SK-N-SH (cell line): ENCODE measurements at regions of chr16 and their contacts with region 1.

Region 1: DNA sequence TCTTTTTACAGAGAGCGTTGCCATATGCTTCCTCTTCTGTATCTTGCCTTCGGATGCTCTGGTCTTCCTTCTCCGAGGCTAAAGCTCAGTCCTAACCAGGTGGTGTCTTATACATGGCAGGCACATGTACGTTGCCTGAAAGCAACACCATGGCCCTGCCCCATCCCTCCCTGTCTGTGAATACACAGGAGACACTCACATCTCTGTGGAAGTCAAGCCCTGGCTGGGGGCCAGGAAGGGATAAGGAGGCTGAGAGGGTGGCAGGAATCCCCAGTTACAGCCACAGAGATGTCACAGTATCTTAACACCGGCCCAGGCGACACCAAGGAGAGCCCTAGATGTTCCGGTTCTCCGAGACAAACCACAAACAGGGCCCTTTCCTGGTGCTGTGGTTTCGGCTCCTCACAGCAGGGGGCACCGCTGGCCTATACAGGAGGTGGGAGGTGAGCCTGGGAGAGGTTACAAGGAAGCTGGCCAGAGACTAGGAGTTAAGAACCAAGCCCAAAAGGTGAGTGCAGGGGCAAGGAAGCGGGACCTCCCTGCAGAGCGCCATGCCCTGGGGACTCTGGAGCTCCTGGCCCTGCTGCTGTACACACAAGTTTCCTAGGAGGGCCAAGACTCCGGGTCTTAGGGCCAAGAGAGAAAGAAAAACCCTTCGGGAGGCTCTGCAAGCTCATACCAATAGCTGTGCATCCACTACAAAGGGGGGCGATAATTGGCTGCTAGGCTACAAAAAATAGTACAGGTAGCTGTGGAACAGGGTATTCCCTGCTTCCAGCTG is 41.7 kb downstream of the SRL start:
- DNase-seq: peak; percentile 86
- H3K4me3 ChIP-seq: no peak overlapping the region
- H3K27ac ChIP-seq: no peak overlapping the region
- H3K4me1 ChIP-seq: peaks cover 2 to 4% of the 10 kb centered on the region in 2 experiments; a peak in 1 of 4 replicates
- H3K27me3 ChIP-seq: no peaks in the 10 kb centered on the region
- CTCF ChIP-seq: peak; percentile 82
- EP300 ChIP-seq: no peak
- RAD21 ChIP-seq: peak; percentile 90

Region 2: DNA sequence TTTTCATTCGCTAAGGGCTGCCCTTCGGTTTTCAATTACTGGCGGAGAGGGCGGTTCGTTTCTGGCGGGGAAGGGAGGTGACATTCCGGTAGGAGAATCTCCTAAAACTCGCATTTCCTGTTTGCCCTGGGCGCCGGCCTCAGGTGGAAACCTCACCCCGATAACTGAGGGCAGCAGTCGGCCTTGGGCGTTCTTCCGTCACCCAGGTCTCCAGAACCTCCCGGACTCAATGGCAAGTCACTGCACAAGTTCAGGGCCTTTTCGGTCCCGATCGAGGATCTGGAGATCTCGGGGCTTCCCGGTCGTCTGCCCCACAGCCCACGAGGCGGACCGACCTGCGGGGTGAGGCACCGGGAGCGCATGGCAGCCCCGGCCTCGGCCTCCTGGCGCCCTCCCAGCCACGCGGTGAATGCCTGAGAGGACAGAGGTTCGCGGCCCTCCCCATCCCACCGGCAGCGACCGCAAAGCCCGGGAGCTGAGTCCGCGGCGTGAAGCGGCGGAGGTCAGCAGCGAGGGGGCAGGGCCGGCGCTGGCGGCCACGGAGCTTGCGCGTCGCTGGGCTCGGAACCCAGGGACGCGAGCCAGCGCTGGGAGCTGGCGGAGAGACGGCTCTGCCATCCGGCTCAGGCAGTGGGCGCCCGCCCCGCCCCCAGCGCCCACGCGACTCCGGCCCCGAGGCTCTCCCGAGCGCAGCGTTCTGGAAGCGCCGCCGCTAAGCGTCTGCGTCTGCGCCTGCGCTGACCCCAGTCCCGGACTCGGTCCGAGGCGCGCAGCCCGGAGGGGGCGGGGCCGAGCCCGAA is 16.8 kb before region 1 on chr16:
- CTCF ChIA-PET with region 1: interaction called, 11 read pairs
- POLR2A ChIA-PET with region 1: interaction called, 4 read pairs
- DNase-seq: peak; percentile 100
- H3K4me3 ChIP-seq: peak overlapping the region; percentile 65 to 74
- H3K27ac ChIP-seq: peak overlapping the region; percentile 62 to 88
- H3K4me1 ChIP-seq: peaks cover 0 to 9% of the 10 kb centered on the region in 2 experiments; a peak in 1 of 4 replicates
- H3K27me3 ChIP-seq: no peaks in the 10 kb centered on the region
- CTCF ChIP-seq: no peak
- EP300 ChIP-seq: no peak
- RAD21 ChIP-seq: no peak

Region 3: DNA sequence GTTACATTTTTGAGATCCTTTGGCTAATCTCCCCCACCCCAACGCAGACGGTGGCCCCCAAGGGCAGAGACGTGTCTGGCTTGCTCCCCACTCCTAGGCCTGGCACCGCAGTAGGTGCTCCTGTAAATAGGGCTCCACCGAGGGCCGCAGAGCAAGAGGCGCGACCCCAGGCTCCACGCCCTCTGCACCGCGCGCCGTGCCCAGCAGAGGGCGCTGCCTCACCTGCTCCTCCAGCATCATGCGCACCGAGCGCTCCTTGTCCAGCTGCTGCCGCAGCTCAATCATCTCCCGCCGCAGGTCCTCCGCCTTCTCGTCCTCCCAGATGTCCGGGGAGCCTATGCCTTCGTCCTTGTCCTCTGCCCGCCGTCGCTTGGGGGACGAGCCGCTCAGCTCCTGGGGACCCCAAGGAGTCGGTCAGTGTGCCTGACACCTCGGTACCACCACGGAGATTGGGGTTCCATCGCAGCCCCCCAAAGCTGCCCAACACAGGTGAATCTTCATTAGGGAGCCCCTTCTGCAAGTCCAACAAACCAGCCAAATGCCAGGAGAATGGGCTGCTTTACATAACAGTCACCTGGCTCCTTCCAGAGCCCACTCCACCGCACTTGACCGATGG is 61.5 kb after region 1 on chr16:
- CTCF ChIA-PET with region 1: interaction called, 21 read pairs
- POLR2A ChIA-PET with region 1: no interaction called
- DNase-seq: peak; percentile 78
- H3K4me3 ChIP-seq: no peak overlapping the region; a peak in 1 of 4 replicates
- H3K27ac ChIP-seq: no peak overlapping the region
- H3K4me1 ChIP-seq: peaks cover 6 to 23% of the 10 kb centered on the region in 2 experiments; a peak in 1 of 4 replicates
- H3K27me3 ChIP-seq: no peaks in the 10 kb centered on the region
- CTCF ChIP-seq: peak; percentile 68
- EP300 ChIP-seq: no peak
- RAD21 ChIP-seq: peak; percentile 55

Region 4: DNA sequence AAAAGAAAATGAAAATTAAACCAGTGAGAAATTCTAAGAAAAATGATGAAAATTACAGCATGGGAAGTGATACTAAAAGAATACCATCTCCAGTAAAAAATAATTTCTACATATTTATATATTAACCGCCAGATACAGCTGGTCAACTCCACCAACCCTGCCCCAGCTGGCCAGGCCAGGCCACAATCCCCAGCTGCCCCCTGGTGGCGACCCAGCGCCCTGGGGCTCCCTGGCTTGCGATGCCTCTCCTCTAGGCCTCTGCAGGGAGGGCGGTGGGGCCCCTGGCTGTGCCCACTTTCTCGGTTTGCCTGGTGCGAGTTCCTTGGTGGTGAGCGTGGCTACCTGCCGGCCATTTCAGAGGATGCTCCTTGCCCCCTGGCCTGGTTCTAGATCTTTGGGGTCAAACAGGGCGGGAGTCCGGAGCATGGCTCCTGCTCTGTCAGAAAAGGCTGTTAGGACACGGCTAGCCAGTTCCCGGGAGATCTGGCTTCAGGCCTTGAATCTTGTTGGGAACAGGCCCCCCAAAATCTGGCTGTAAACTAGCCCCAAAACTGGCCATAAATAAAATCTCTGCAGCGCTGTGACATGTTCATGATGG is 130.2 kb after region 1 on chr16:
- CTCF ChIA-PET with region 1: interaction called, 58 read pairs
- POLR2A ChIA-PET with region 1: no interaction called
- DNase-seq: peak; percentile 94
- H3K4me3 ChIP-seq: no peak overlapping the region
- H3K27ac ChIP-seq: no peak overlapping the region
- H3K4me1 ChIP-seq: peaks cover 15 to 21% of the 10 kb centered on the region in 2 experiments; a peak in 3 of 4 replicates
- H3K27me3 ChIP-seq: no peaks in the 10 kb centered on the region
- CTCF ChIP-seq: peak; percentile 96
- EP300 ChIP-seq: no peak
- RAD21 ChIP-seq: peak; percentile 93

Region 5: GRCh38 chr16:4616047-4616811 is 416.0 kb after region 1 on chr16:
- CTCF ChIA-PET with region 1: no interaction called
- POLR2A ChIA-PET with region 1: no interaction called
- DNase-seq: peak; percentile 96
- H3K4me3 ChIP-seq: peak overlapping the region; percentile 58 to 64
- H3K27ac ChIP-seq: peak overlapping the region; percentile 89 to 90
- H3K4me1 ChIP-seq: peaks cover 13 to 39% of the 10 kb centered on the region in 2 experiments; a peak in 3 of 4 replicates
- H3K27me3 ChIP-seq: no peaks in the 10 kb centered on the region
- CTCF ChIP-seq: peak; percentile 53
- EP300 ChIP-seq: peak in 1 of 2 experiments; percentile 4; a peak in 1 of 4 replicates
- RAD21 ChIP-seq: no peak